Activated T-helper 1 cell treated with anti-CD3 and anti-CD28 coated beads, Interleukin-12 subunit alpha, Interleukin-12 subunit beta, Interleukin-2, Interleukin-4 antibody, amounts not matched to agents 30 ng/mL and 10 ng/mL and 1 ng/mL, durations not matched to agents 14 hours and 24 hours and 36 hours (primary cell): ENCODE measurements at regions of chr22 and their contacts with region 1.

Region 1: GRCh38 chr22:28907311-28908008 is 24.1 kb downstream of the ZNRF3 start:
- DNase-seq: peak; percentile 3
- H3K4me3 Mint-ChIP-seq: peak overlapping the region; percentile 4
- H3K27ac Mint-ChIP-seq: peak overlapping the region; percentile 55
- H3K4me1 Mint-ChIP-seq: peaks cover 24% of the 10 kb centered on the region
- H3K27me3 Mint-ChIP-seq: peaks cover 71% of the 10 kb centered on the region

Region 2: DNA sequence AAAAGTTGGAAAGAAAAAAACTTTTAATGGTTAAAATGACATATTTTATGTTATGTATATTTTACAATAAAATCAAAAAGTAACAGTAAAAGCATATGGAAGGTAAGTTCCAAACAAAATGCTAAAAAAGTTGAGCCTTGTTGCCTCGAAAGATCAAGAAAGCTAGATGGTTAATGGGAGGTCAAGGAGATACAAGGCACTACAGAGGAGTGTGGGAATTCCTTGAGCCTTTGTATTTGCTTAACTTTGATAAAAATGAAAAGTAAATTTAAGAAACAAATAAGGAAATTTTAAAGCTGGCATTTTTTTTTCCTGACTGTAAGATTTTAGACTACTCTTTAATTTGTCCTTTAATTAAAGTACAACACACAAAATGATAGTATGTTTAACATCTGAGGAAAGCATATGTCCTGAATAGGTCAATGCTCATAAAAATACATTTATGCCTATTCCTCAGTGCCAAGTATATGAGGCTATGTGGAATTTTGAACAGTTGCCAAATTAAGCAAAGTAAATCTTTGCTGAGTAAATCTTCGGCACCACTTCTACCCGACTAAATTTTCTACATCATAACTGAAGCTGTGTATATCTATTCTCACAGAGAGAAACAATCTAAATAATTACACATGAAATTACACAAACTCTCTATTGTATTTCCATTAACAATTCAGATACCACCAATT is 336.6 kb before region 1 on chr22:
- intact Hi-C with region 1: no loop called
- DNase-seq: no peak
- H3K4me3 Mint-ChIP-seq: no peak overlapping the region
- H3K27ac Mint-ChIP-seq: no peak overlapping the region
- H3K4me1 Mint-ChIP-seq: no peaks in the 10 kb centered on the region
- H3K27me3 Mint-ChIP-seq: peaks cover 50% of the 10 kb centered on the region

Region 3: DNA sequence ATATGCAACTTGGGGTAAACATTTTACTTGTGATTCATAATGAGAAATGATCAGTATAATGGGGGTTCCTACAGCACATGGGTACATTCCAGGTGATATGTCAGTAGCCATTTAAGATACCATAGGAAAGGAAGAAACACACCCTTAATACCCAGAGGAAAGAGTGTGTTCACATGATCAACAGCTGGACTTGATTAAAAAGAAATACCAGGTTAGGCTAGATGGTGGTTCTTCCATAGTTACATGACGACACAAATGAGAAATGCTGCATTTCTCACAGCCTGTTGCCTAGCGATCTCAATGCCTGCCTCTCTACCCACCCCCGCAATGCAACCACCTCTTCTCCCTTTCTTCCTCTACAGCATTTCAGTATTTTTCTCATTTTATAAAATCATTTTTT is 324.7 kb before region 1 on chr22:
- intact Hi-C with region 1: no loop called
- DNase-seq: no peak
- H3K4me3 Mint-ChIP-seq: no peak overlapping the region
- H3K27ac Mint-ChIP-seq: no peak overlapping the region
- H3K4me1 Mint-ChIP-seq: no peaks in the 10 kb centered on the region
- H3K27me3 Mint-ChIP-seq: peaks cover 15% of the 10 kb centered on the region

Region 4: DNA sequence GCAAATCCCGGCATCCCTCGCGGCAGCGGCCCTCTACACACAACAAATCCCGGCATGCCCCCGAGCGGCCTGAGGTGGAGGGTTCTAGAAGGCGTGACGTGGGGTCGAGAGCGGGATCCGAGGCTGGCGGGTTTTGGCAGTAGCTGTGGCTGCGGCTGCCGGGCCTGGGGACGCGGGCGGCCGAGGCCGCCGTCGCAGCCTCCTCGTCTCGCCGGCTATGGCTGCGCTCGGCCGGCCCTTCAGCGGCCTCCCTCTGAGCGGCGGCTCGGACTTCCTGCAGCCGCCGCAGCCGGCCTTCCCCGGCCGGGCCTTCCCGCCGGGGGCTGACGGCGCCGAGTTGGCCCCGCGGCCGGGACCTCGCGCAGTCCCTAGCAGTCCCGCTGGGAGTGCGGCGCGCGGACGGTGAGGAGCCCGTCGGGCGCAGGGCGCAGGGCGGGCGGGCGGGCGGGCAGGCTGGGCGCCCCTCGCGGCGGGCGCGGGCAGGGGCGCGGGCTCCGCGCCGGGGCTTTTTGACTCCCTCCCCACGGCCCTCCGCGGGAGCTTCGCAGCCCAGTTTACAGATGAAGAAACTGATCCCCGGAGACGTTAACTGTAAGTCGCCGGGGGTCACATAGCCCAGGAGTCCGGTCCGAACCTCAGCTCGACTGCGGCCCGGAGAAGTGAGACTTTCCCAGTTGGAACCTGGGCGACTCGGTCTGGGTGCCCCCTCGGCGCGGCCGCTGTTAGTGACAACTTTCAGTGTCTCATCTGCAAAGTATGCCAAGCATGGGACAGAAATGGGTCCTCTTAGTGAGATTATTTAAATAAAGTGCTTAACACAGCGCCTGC is 134.6 kb before region 1 on chr22 and contains the start of gene CCDC117:
- intact Hi-C with region 1: loop called (anchors 1 kb)
- DNase-seq: peak; percentile 90
- H3K4me3 Mint-ChIP-seq: peak within 1 kb of the TSS; percentile 100
- H3K27ac Mint-ChIP-seq: peak within 1 kb of the TSS; percentile 100
- H3K4me1 Mint-ChIP-seq: peaks cover 22% of the 10 kb centered on the region
- H3K27me3 Mint-ChIP-seq: peaks cover 4% of the 10 kb centered on the region
- total RNA-seq, gene CCDC117: 46.4 and 52.8 TPM in 2 replicates

Region 5: DNA sequence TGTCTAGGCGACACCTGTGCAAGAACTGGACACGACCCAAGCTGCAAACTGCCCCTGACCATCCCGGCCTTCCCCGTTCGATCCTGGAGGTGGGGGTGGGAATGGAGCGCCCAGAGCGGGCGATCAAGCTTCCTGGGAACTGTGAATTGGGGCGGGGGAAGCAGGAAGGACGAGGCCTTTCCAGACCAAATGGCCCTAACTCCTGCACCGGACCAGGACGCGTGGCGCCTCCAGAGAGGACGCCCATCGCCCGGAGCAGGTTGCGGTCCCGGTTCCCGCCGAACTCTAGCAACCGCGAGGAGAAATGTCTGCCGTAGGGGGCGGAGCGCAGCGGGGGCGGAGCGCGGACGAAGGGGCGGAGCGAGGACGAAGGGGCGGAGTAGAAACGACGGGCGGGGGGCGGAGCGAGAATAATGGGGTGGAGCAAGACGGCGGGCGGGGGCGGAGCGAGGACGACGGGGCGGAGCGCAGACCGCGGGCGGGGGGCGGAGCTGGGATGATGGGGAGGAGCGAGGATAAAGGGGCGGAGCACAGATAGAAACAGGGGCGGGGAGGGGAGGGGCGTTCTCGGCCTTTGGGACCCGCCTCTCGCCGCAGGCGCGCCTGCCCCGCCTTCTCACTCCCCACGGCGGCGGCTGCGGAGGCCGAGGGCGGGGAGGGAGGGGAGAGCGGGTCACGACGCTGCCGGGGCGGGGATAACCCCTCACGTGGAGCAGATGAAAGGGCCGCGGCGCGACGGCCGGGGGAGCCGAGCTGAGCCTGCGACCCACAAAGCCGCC is 24.4 kb before region 1 on chr22 and contains the start of gene ZNRF3:
- intact Hi-C with region 1: loop called (anchors 1 kb)
- DNase-seq: peak; percentile 78
- H3K4me3 Mint-ChIP-seq: peak within 1 kb of the TSS; percentile 79
- H3K27ac Mint-ChIP-seq: no peak within 1 kb of the TSS
- H3K4me1 Mint-ChIP-seq: peaks cover 14% of the 10 kb centered on the region
- H3K27me3 Mint-ChIP-seq: peaks cover 67% of the 10 kb centered on the region
- total RNA-seq, gene ZNRF3: 1.9 and 2.1 TPM in 2 replicates

Region 6: DNA sequence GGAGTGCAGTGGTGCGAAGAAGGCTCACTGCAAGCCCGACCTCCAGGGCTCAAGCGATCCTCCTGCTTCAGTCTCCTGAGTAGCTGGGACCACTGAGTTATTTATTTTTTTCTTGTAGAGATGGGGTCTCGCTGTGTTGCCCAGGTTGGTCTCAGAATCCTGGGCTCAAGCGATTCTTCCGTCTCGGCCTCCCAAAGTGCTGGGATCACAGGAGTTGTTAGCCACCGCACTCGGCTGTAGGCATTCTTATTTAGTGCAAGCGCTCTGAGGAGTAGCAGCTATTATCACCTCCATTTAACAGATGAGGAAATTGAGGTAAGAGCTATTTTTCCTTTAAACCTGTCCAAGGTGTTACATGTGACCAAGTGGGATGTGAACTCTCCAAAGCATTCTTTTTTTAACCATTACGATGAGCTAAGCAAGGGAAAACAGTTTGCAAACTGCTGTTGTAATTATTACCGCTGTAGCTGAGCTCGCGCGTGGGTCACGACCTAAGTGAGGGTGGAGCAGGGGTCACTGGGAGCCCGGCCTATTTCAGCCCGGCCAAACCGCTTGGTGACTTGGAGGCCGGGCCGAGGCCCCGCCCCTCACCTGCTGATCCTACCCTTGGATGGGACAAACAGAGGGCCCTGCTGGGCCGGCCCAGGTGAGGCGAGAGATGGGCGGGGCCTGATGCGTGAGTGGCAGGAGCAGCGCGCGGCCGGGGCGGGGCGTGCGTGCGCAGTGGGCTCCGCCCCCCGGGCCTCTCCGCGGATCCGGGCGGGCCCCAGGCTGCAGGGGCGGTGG is 164.9 kb after region 1 on chr22:
- intact Hi-C with region 1: no loop called
- DNase-seq: peak; percentile 77
- H3K4me3 Mint-ChIP-seq: peak overlapping the region; percentile 68
- H3K27ac Mint-ChIP-seq: no peak overlapping the region
- H3K4me1 Mint-ChIP-seq: peaks cover 18% of the 10 kb centered on the region
- H3K27me3 Mint-ChIP-seq: peaks cover 65% of the 10 kb centered on the region

Region 7: DNA sequence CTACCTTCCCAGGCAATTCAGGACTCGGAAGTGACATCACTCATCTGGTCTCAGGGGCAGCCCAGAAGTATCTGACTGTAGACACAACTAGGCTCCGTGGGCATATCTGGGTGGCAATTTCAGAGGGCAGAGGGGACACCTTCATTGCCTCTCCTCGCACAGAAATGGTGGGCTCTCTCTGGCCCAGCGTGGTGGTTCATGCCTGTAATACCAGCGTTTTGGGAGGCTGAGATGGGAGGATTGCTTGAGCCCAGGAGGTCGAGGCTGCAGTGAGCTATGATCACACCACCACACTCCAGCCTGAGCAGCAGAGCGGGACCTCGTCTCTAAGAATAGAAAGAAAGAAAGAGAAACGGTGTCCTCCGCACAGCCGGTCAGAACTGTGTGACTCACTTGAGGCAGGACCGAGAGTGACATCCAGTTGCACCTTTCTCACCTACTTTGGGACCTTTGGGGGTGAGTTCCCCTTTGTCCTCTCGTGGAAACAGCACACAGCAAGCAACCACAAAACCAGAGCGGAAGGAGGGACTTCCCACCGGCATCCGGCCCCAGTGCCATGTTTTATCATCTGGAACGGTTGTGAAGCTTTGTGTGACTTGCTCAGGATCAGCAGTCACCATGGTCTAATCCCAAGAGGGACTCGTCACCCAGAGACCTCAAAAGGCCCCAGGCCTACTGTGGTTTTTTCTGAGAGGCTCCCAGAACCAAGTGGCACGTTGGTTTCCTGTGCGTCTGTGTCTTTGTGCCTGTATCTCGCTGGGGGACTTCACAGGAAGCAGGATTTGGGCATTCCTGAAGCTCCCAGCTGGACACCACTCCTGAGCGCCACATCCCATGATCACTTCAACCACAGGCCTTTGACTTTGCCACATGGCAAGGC is 259.8 kb after region 1 on chr22:
- intact Hi-C with region 1: loop called (anchors 2 kb)
- DNase-seq: peak; percentile 59
- H3K4me3 Mint-ChIP-seq: peak overlapping the region; percentile 53
- H3K27ac Mint-ChIP-seq: peak overlapping the region; percentile 69
- H3K4me1 Mint-ChIP-seq: peaks cover 24% of the 10 kb centered on the region
- H3K27me3 Mint-ChIP-seq: peaks cover 38% of the 10 kb centered on the region